ENCODE measurements at regions of chr14 and their contacts with region 1.

Region 1: GRCh38 chr14:68312884-68313610 is 479.8 kb downstream of the ZFP36L1 start:
- DNase-seq: peak; percentile 99
- ATAC-seq: peak; percentile 89
- H3K4me3 ChIP-seq: no peak overlapping the region; the same call in 1 of the 2 replicates
- H3K27ac ChIP-seq: peak overlapping the region; percentile 91
- H3K4me1 ChIP-seq: peaks cover 64% of the 10 kb centered on the region
- H3K27me3 ChIP-seq: no peaks in the 10 kb centered on the region
- CTCF ChIP-seq: no peak
- EP300 ChIP-seq: peak; percentile 88 to 97; a peak in 3 of 4 replicates
- POLR2A ChIP-seq: peak; percentile 49; the same call in 1 of the 2 replicates
- RAD21 ChIP-seq: peak; percentile 41

Region 2: DNA sequence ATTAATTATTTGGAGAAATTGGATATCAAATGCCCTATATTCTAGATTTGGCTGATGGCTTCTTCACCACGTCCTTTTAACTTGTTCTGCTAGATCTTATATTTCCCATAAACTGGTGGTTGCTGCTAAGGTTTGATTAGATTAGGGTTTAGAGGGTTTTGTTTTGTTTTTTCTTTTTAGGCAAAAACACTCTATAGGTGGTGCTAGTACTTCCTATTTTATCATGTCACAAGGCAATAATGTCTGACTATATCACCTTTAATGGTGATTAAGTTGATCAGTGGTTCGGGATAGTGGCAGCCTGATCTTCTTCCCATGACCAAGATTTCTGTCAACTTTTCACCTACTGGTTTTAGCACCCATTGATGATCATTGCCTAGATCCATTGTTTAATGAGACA is 38.3 kb before region 1 on chr14:
- CTCF ChIA-PET with region 1: interaction called, 15 read pairs
- POLR2A ChIA-PET with region 1: interaction called, 141 read pairs
- RAD21 ChIA-PET with region 1: interaction called, 343 read pairs
- SMC1A ChIA-PET with region 1: interaction called, 115 read pairs
- in situ Hi-C with region 1: no loop called
- intact Hi-C with region 1: loop called (anchors 5 kb)
- DNase-seq: no peak
- ATAC-seq: no peak
- H3K4me3 ChIP-seq: no peak overlapping the region
- H3K27ac ChIP-seq: peak overlapping the region; percentile 91
- H3K4me1 ChIP-seq: peaks cover 78% of the 10 kb centered on the region
- H3K27me3 ChIP-seq: no peaks in the 10 kb centered on the region
- CTCF ChIP-seq: peak in 1 of 3 experiments; percentile 22; a peak in 1 of 6 replicates
- EP300 ChIP-seq: no peak
- POLR2A ChIP-seq: no peak
- RAD21 ChIP-seq: 0 out of 2 replicates have a peak, but pooled peaks have one; percentile 21

Region 3: DNA sequence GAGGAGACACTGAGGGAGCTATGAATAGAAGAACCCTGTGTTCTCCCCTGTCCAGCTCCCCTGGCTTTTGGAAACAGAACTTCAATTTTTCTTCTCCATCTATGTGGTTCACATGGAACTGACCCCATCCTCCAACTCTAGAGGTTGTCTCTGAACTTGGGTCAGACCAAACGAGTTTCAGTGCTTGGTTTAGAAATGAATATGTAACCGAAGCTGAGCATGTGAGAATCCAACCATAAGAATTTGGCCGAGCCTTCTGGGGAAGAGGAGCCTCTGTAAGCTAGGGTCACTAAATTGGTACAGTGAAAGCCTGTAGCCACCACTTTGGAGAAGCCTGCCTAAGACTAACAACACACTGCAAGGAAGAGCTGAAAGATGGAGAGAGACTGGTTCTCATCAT is 15.5 kb after region 1 on chr14:
- CTCF ChIA-PET with region 1: interaction called, 22 read pairs
- POLR2A ChIA-PET with region 1: interaction called, 14 read pairs
- RAD21 ChIA-PET with region 1: interaction called, 21 read pairs
- SMC1A ChIA-PET with region 1: interaction called, 44 read pairs
- in situ Hi-C with region 1: no loop called
- intact Hi-C with region 1: no loop called
- DNase-seq: no peak
- ATAC-seq: peak; percentile 85
- H3K4me3 ChIP-seq: no peak overlapping the region
- H3K27ac ChIP-seq: peak overlapping the region; percentile 64
- H3K4me1 ChIP-seq: peaks cover 36% of the 10 kb centered on the region
- H3K27me3 ChIP-seq: no peaks in the 10 kb centered on the region
- CTCF ChIP-seq: no peak
- EP300 ChIP-seq: peak in 1 of 2 experiments; percentile 44; a peak in 1 of 4 replicates
- POLR2A ChIP-seq: no peak
- RAD21 ChIP-seq: peak; percentile 30; the same call in 1 of the 2 replicates

Region 4: GRCh38 chr14:68359837-68360552 is 46.9 kb after region 1 on chr14:
- CTCF ChIA-PET with region 1: interaction called, 3 read pairs
- POLR2A ChIA-PET with region 1: interaction called, 9 read pairs
- RAD21 ChIA-PET with region 1: interaction called, 21 read pairs
- SMC1A ChIA-PET with region 1: interaction called, 68 read pairs
- in situ Hi-C with region 1: no loop called
- intact Hi-C with region 1: no loop called
- DNase-seq: no peak
- ATAC-seq: peak; percentile 47
- H3K4me3 ChIP-seq: no peak overlapping the region
- H3K27ac ChIP-seq: peak overlapping the region; percentile 82
- H3K4me1 ChIP-seq: peaks cover 33% of the 10 kb centered on the region
- H3K27me3 ChIP-seq: no peaks in the 10 kb centered on the region
- CTCF ChIP-seq: no peak
- EP300 ChIP-seq: no peak
- POLR2A ChIP-seq: no peak
- RAD21 ChIP-seq: no peak

Region 5: GRCh38 chr14:68408680-68409079 is 95.6 kb after region 1 on chr14:
- CTCF ChIA-PET with region 1: interaction called, 4 read pairs
- POLR2A ChIA-PET with region 1: interaction called, 13 read pairs
- RAD21 ChIA-PET with region 1: interaction called, 197 read pairs
- SMC1A ChIA-PET with region 1: interaction called, 44 read pairs
- in situ Hi-C with region 1: no loop called
- intact Hi-C with region 1: loop called (anchors 2 kb)
- DNase-seq: no peak
- ATAC-seq: peak; percentile 42
- H3K4me3 ChIP-seq: no peak overlapping the region
- H3K27ac ChIP-seq: no peak overlapping the region
- H3K4me1 ChIP-seq: peaks cover 39% of the 10 kb centered on the region
- H3K27me3 ChIP-seq: no peaks in the 10 kb centered on the region
- CTCF ChIP-seq: peak; percentile 25 to 54 (median 33); a peak in 5 of 6 replicates
- EP300 ChIP-seq: no peak
- POLR2A ChIP-seq: no peak
- RAD21 ChIP-seq: peak; percentile 67